SK-N-SH (cell line): ENCODE measurements at regions of chr2 and their contacts with region 1.

Region 1: GRCh38 chr2:25851740-25852503 is 26.4 kb downstream of the ASXL2 start:
- DNase-seq: peak; percentile 63
- H3K4me3 ChIP-seq: no peak overlapping the region
- H3K27ac ChIP-seq: peak overlapping the region in 1 of 2 experiments; percentile 33; a peak in 2 of 4 replicates
- H3K4me1 ChIP-seq: peaks cover 4 to 10% of the 10 kb centered on the region in 2 experiments; a peak in 3 of 4 replicates
- H3K27me3 ChIP-seq: no peaks in the 10 kb centered on the region
- CTCF ChIP-seq: peak; percentile 94
- EP300 ChIP-seq: no peak
- RAD21 ChIP-seq: peak; percentile 83

Region 2: GRCh38 chr2:25829377-25829704 is 22.6 kb before region 1 on chr2:
- CTCF ChIA-PET with region 1: interaction called, 14 read pairs
- POLR2A ChIA-PET with region 1: no interaction called
- DNase-seq: no peak
- H3K4me3 ChIP-seq: no peak overlapping the region
- H3K27ac ChIP-seq: no peak overlapping the region
- H3K4me1 ChIP-seq: peaks cover 0 to 2% of the 10 kb centered on the region in 2 experiments; a peak in 1 of 4 replicates
- H3K27me3 ChIP-seq: no peaks in the 10 kb centered on the region
- CTCF ChIP-seq: no peak
- EP300 ChIP-seq: no peak
- RAD21 ChIP-seq: no peak

Region 3: DNA sequence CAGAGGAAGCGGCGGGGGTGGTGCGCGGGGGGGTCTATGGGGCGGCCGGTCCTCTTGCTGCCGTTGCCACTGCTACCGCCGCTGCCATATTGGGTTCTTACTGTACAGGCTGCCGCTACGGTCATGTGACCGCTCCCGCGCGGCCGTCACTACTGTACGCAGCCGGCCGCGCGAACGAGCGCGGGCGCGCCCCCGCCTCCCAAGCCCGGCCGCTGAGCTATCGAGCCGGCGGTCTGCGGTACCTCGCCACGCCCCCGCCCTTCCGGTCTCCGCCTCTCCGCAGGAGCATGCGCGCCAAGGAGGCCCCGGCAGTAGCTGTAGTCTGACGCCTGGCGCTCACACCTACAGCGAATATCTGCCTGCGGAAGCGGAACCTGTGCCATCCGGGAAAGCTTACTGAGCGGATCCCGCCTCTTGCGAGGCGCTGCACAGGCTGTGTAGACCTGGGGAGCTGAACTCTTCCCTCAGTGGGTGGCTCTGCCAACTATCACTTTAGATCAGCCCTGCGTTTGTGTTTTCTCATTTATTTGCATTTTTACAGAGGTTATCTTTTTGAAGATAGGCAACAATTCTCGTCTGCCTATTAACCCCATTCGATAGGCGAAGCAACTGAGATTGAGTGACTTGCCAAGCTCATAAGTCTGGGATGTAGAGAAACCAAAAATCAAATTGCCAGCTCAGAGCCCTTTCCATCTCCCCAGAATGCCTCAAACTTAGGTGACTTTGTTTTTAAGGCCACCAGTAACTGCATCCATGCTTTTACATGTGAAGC is 26.6 kb after region 1 on chr2 and contains the start of gene ASXL2:
- CTCF ChIA-PET with region 1: interaction called, 14 read pairs
- POLR2A ChIA-PET with region 1: interaction called, 7 read pairs
- DNase-seq: peak; percentile 99
- H3K4me3 ChIP-seq: peak within 1 kb of the TSS; percentile 96 to 97
- H3K27ac ChIP-seq: peak within 1 kb of the TSS; percentile 90 to 91
- H3K4me1 ChIP-seq: peaks cover 8 to 16% of the 10 kb centered on the region in 2 experiments; a peak in 3 of 4 replicates
- H3K27me3 ChIP-seq: no peaks in the 10 kb centered on the region
- CTCF ChIP-seq: 0 out of 2 replicates have a peak, but pooled peaks have one; percentile 7
- EP300 ChIP-seq: peak in 1 of 2 experiments; percentile 16; a peak in 1 of 4 replicates
- RAD21 ChIP-seq: no peak
- polyA plus RNA-seq, gene ASXL2: 4.8 and 6.1 TPM in 2 replicates

Region 4: DNA sequence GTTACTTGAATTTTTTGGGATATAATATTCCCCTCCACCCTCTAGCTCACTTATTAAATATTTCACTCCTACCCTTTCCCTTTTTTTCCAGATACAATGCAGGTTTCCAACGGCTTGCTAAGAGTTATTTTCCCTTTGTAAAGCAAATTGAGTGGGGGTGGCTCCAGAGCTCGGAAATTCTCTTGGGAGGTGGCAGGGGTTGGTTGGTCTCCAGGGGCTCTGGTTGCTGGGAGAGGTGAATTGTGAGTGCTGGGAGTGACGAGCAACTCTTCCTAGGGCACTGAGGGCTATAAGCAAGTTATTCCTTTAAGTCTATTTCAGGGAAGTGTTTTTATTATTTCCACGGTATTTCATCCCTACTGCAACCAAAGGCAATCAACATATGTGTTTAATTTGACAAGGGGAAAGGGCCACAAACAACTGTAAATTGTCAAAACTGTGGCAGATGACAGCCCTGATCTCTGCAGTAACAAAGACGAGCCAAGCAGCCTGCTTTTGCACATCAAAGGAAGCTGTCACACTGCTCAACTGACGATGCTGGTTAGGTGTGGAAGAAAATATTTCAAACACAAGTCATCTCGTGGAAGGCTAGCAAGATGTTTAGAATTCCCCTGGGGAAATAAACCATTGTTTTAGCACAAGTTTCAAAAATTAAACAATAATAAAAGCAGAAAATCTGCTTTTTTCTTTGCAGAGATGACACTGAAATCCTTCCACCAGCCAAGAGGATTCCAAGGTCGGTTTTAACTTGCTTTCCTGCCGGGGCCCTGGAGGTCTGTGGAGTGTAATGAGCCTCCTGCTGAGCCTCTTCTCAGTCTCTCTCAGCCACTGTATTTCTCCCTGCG is 61.2 kb after region 1 on chr2:
- CTCF ChIA-PET with region 1: interaction called, 11 read pairs
- POLR2A ChIA-PET with region 1: no interaction called
- DNase-seq: peak; percentile 72
- H3K4me3 ChIP-seq: no peak overlapping the region
- H3K27ac ChIP-seq: peak overlapping the region in 1 of 2 experiments; percentile 29; a peak in 1 of 4 replicates
- H3K4me1 ChIP-seq: peaks cover 7 to 11% of the 10 kb centered on the region in 2 experiments; a peak in 2 of 4 replicates
- H3K27me3 ChIP-seq: no peaks in the 10 kb centered on the region
- CTCF ChIP-seq: no peak
- EP300 ChIP-seq: no peak
- RAD21 ChIP-seq: 0 out of 2 replicates have a peak, but pooled peaks have one; percentile 1

Region 5: GRCh38 chr2:25951071-25951547 is 99.2 kb after region 1 on chr2:
- CTCF ChIA-PET with region 1: interaction called, 36 read pairs
- POLR2A ChIA-PET with region 1: no interaction called
- DNase-seq: peak; percentile 91
- H3K4me3 ChIP-seq: no peak overlapping the region; a peak in 1 of 4 replicates
- H3K27ac ChIP-seq: peak overlapping the region in 1 of 2 experiments; percentile 86; a peak in 2 of 4 replicates
- H3K4me1 ChIP-seq: peaks cover 5 to 7% of the 10 kb centered on the region in 2 experiments; a peak in 1 of 4 replicates
- H3K27me3 ChIP-seq: no peaks in the 10 kb centered on the region
- CTCF ChIP-seq: peak; percentile 99
- EP300 ChIP-seq: peak in 1 of 2 experiments; percentile 73; a peak in 1 of 4 replicates
- RAD21 ChIP-seq: peak; percentile 100